Adrenal gland (tissue), 19 donors: ENCODE measurements at regions of chr12 and their contacts with region 1.

Region 1: DNA sequence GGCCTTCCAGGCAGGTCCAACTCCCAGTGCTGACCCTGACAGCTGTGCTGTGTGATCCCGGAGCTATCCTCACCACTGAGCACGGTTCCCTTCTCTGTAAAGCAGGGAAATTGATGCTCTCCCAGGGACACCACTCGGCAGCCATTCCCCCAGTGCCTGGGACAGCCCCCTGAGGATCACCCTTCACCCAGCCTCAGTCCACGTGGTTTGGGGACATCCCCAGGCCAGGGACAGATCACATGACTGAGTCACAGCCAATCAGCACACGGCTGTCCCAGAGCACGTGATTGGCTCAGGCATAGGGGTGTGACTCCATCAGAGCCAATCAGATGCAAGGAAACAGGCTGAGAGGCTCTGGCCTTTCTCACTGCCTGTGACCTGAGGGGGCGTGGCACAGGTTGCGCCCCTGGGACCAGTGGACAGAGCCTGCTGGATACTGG is 68.8 kb upstream of the SFSWAP start:
- DNase-seq: peak in 1 of 7 donors; percentile 37
- H3K4me3 ChIP-seq: no peak overlapping the region
- H3K27ac ChIP-seq: no peak overlapping the region
- H3K4me1 ChIP-seq: no peaks in the 10 kb centered on the region
- H3K27me3 ChIP-seq: no peaks in the 10 kb centered on the region
- CTCF ChIP-seq: no peak
- POLR2A ChIP-seq: no peak

Region 2: DNA sequence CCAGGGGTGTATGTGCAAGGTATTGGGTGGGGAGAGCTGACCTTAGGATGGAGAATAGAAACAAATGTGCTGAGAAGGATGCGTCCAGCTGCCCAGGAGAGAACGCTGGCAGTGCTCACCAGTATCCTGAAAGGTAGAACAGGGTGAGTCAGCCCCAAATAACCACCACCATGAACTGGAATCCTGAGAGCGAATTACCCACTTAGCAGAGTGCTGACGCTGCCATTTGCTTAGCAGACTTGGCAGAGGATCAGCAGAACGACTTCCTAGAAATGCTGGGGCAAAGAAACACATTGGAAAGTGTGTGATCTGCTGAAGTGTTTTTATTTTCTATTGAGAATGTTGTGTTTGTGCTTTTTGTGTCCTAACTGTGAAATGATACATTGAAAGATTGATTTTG is 474.8 kb before region 1 on chr12:
- intact Hi-C with region 1: no loop called
- DNase-seq: peak in 5 of 7 donors; percentile 30 to 54 (median 37)
- H3K4me3 ChIP-seq: no peak overlapping the region
- H3K27ac ChIP-seq: no peak overlapping the region
- H3K4me1 ChIP-seq: no peaks in the 10 kb centered on the region
- H3K27me3 ChIP-seq: peaks cover 4% of the 10 kb centered on the region
- CTCF ChIP-seq: no peak
- POLR2A ChIP-seq: no peak

Region 3: DNA sequence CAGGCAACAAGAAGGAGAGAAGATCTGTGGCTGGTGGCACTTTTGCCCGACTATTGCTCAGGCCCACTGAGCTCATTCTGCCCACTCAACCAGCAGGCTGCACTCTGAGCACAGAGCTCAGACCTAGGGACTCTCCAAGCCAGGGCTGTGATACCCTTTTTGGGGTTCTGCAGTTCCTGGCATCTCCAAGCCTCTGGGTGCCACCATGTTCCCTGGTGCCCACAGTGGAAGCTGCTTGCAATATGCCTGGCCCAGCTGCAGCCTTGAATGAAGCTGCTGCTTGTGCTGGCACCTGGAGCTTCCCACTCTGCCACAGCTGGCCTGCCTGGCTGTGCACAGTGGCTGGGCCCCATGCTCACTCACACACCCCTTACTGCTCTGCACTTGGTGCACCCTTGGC is 452.3 kb before region 1 on chr12:
- intact Hi-C with region 1: no loop called
- DNase-seq: no peak
- H3K4me3 ChIP-seq: no peak overlapping the region
- H3K27ac ChIP-seq: no peak overlapping the region
- H3K4me1 ChIP-seq: no peaks in the 10 kb centered on the region
- H3K27me3 ChIP-seq: no peaks in the 10 kb centered on the region
- CTCF ChIP-seq: no peak
- POLR2A ChIP-seq: no peak

Region 4: DNA sequence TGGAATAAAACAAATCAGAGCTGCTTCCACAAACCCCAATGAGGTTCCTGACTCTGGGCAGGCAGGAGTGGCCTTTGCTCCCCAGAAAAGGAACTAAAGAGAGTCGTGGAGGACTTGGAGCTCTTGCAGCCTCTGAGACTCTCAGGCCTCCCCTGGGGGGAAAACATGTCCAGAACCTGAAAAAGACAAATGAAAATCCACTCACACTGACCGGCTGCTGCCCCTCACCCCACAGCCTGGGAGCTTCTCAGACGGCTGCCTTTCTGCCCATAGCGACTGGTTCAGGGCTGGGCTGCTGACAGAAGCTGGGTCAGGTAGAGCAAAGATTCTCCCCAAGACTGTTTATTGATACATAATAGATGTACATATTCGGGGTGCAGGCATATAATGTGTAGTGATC is 332.4 kb before region 1 on chr12:
- intact Hi-C with region 1: loop called in 1 of 2 experiments (anchors 5 kb)
- DNase-seq: no peak
- H3K4me3 ChIP-seq: no peak overlapping the region
- H3K27ac ChIP-seq: no peak overlapping the region
- H3K4me1 ChIP-seq: no peaks in the 10 kb centered on the region
- H3K27me3 ChIP-seq: no peaks in the 10 kb centered on the region
- CTCF ChIP-seq: no peak
- POLR2A ChIP-seq: no peak